WTC11 (cell line): ENCODE measurements at regions of chr4 and their contacts with region 1.

Region 1: GRCh38 chr4:73258686-73259570 is at the start of gene ANKRD17:
- DNase-seq: peak; percentile 93
- ATAC-seq: peak; percentile 75
- H3K4me3 Mint-ChIP-seq: peak within 1 kb of the TSS; percentile 99
- H3K27ac Mint-ChIP-seq: peak within 1 kb of the TSS; percentile 99
- H3K4me1 Mint-ChIP-seq: peaks cover 32% of the 10 kb centered on the region
- H3K27me3 Mint-ChIP-seq: no peaks in the 10 kb centered on the region
- CTCF ChIP-seq: no peak
- total RNA-seq, gene ANKRD17: 66.9 to 76.0 TPM (median 71.0 TPM) in 3 replicates

Region 2: GRCh38 chr4:73127839-73128453 is 131.0 kb before region 1 on chr4:
- CTCF ChIA-PET with region 1: interaction called, 12 read pairs
- POLR2A ChIA-PET with region 1: no interaction called
- DNase-seq: peak; percentile 10
- ATAC-seq: peak; percentile 94
- H3K4me3 Mint-ChIP-seq: no peak overlapping the region
- H3K27ac Mint-ChIP-seq: no peak overlapping the region
- H3K4me1 Mint-ChIP-seq: peaks cover 7% of the 10 kb centered on the region
- H3K27me3 Mint-ChIP-seq: no peaks in the 10 kb centered on the region
- CTCF ChIP-seq: no peak

Region 3: DNA sequence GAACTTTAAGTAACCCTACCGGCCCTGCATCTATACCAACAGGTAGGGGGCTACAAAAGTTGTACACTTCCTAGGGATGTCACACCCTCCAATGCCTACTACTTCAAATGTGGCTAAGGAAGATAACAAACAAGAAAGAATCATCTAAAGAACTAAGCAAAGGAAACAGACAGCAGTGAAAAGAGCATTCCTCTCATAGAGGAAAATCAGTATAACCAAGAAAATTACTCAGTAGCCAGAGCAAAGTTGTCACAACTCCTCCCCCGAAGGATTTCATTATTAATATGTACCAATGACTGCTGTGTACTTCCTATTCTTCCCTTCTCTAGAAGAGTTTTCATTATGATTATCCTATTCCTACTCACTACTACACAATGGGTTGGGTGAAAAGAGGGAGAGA is 13.0 kb before region 1 on chr4:
- CTCF ChIA-PET with region 1: interaction called, 12 read pairs
- POLR2A ChIA-PET with region 1: interaction called, 3 read pairs
- DNase-seq: no peak
- ATAC-seq: no peak
- H3K4me3 Mint-ChIP-seq: no peak overlapping the region
- H3K27ac Mint-ChIP-seq: peak overlapping the region; percentile 70
- H3K4me1 Mint-ChIP-seq: peaks cover 39% of the 10 kb centered on the region
- H3K27me3 Mint-ChIP-seq: no peaks in the 10 kb centered on the region
- CTCF ChIP-seq: no peak

Region 4: DNA sequence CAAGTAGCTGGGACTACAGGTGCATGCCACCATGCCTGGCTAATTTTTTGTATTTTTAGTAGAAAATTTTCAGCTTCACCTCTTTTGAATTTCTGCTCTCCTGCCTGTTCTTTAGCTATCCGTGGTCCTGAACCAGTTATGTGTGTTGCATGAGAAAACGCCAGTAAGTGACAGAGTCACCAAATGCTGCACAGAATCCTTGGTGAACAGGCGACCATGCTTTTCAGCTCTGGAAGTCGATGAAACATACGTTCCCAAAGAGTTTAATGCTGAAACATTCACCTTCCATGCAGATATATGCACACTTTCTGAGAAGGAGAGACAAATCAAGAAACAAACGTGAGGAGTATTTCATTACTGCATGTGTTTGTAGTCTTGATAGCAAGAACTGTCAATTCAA is 159.0 kb after region 1 on chr4:
- CTCF ChIA-PET with region 1: no interaction called
- POLR2A ChIA-PET with region 1: no interaction called
- DNase-seq: no peak
- ATAC-seq: no peak
- H3K4me3 Mint-ChIP-seq: no peak overlapping the region
- H3K27ac Mint-ChIP-seq: no peak overlapping the region
- H3K4me1 Mint-ChIP-seq: peaks cover 3% of the 10 kb centered on the region; the same call in 1 of the 2 replicates
- H3K27me3 Mint-ChIP-seq: no peaks in the 10 kb centered on the region
- CTCF ChIP-seq: no peak